ENCODE measurements at regions of chr1 and their contacts with region 1.

Region 1: GRCh38 chr1:165697881-165698760 is at the start of gene ALDH9A1:
- DNase-seq: peak; percentile 93 to 97 (median 96)
- ATAC-seq: peak; percentile 96
- H3K4me3 ChIP-seq: peak within 1 kb of the TSS; percentile 93
- H3K27ac ChIP-seq: peak within 1 kb of the TSS; percentile 82
- H3K4me1 ChIP-seq: peaks cover 6 to 7% of the 10 kb centered on the region in 2 experiments
- H3K27me3 ChIP-seq: no peaks in the 10 kb centered on the region; a peak in 1 of 5 replicates
- CTCF ChIP-seq: peak; percentile 45 to 64 (median 47)
- EP300 ChIP-seq: no peak
- POLR2A ChIP-seq: peak; percentile 95
- RAD21 ChIP-seq: peak; percentile 22 to 55
- polyA plus RNA-seq, gene ALDH9A1: 26.5 to 35.0 TPM

Region 2: DNA sequence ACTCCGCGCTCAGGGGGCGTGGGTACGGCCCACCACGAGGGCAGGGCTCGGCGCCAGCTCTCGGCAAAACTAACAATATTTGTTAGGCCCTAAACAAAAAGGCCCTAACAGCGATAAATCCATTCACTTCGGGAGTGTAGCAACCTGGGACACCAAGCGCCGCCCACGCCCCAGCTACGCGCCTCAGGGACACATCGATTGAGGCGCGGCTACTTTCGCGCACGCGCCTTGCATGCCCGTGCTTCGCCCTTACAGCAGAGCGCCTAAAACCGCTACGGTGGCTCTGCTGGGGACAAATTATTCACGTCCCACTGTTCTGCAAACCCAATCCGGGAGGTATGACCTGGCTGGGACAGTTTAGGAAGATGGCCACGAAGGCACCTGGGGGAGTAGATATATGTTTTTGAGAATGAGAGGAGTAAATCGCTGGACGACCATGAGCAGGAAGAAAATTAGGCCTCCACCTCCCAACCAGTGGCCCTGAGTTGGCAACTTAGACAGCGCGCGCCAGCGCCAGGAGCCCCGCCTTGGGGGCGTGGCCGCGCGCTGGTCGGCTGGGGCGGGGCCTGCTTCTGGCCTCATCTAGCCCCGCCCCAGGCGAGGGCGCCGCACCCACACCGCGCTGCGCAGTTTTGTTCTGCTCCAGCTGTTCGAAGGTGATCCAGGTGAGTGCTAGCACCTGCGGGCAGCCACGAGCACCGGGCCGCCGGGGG is 67.3 kb before region 1 on chr1 and contains the start of gene MGST3:
- CTCF ChIA-PET with region 1: interaction called, 4 read pairs
- POLR2A ChIA-PET with region 1: interaction called, 4 read pairs
- in situ Hi-C with region 1: no loop called
- intact Hi-C with region 1: loop called (anchors 1 kb)
- DNase-seq: peak; percentile 95 to 99 (median 98)
- ATAC-seq: peak; percentile 94
- H3K4me3 ChIP-seq: peak within 1 kb of the TSS; percentile 74
- H3K27ac ChIP-seq: peak within 1 kb of the TSS; percentile 98
- H3K4me1 ChIP-seq: peaks cover 13 to 35% of the 10 kb centered on the region in 2 experiments; a peak in 4 of 5 replicates
- H3K27me3 ChIP-seq: no peaks in the 10 kb centered on the region
- CTCF ChIP-seq: no peak; a peak in 1 of 6 replicates
- EP300 ChIP-seq: no peak
- POLR2A ChIP-seq: peak; percentile 95
- RAD21 ChIP-seq: no peak
- polyA plus RNA-seq, gene MGST3: 255 to 287 TPM

Region 3: GRCh38 chr1:165686121-165686970 is 11.8 kb before region 1 on chr1:
- CTCF ChIA-PET with region 1: no interaction called
- POLR2A ChIA-PET with region 1: interaction called, 11 read pairs
- in situ Hi-C with region 1: no loop called
- intact Hi-C with region 1: no loop called
- DNase-seq: peak; percentile 29 to 64 (median 47)
- ATAC-seq: peak; percentile 98
- H3K4me3 ChIP-seq: no peak overlapping the region
- H3K27ac ChIP-seq: no peak overlapping the region
- H3K4me1 ChIP-seq: no peaks in the 10 kb centered on the region; a peak in 2 of 5 replicates
- H3K27me3 ChIP-seq: no peaks in the 10 kb centered on the region
- CTCF ChIP-seq: peak; percentile 42 to 61 (median 53); a peak in 4 of 6 replicates
- EP300 ChIP-seq: no peak
- POLR2A ChIP-seq: no peak
- RAD21 ChIP-seq: peak in 1 of 2 experiments; percentile 57; a peak in 2 of 4 replicates

Measured in K562 (cell line).